Activated CD4-positive, alpha-beta T cell treated with anti-CD3 and anti-CD28 coated beads for 36 hours (primary cell): ENCODE measurements at regions of chr1 and their contacts with region 1.

Region 1: DNA sequence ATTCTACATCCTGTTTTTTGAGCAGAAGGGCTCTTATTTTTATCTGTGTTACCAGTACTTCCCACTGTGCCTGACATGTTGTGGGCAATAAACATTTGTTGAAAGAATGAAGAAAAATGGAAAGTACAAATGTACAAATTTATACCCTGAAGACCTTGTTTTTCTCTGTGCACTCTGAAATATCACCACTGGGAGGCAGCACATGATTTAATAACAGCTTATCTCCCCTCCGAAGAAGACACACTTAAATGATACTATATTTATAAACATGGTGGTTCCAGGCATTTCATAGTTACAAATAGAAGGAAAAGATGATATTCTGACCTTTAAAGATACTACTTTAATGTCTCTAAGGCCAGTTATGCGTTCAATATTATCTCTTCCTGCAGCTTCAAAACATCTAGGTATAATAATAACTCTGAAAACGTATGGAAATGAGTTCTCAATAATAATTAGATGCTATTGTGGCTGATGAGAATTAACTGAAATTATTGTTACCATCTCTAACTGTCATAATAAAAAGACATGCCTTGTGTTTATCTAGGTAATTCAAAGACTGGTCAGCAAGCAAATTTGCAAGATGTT is 12.8 kb downstream of the DYNLT5 start:
- DNase-seq: peak; percentile 69
- ATAC-seq: peak; percentile 62
- H3K4me3 Mint-ChIP-seq: no peak overlapping the region
- H3K27ac Mint-ChIP-seq: no peak overlapping the region
- H3K4me1 Mint-ChIP-seq: peaks cover 22% of the 10 kb centered on the region
- H3K27me3 Mint-ChIP-seq: no peaks in the 10 kb centered on the region

Region 2: DNA sequence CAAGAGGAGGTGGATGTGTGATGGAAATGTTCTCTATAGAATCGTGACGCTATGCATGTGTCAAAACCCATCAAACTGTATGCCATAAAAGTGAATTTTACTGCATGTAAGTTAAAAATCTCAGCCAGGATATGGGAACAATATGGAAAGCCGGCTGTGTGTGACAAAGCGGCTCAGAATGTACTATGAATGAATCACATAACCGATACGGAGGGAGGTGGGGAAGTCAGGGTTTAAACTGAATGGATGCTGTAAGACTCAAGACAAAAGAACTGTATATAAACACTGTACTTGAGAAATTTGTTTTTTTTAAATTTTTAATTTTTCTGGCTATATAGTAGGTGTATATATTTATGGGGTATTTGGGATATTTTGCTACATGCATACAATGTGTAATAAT is 1084.0 kb before region 1 on chr1:
- CTCF ChIA-PET with region 1: no interaction called
- POLR2A ChIA-PET with region 1: no interaction called
- intact Hi-C with region 1: no loop called
- DNase-seq: no peak
- ATAC-seq: no peak
- H3K4me3 Mint-ChIP-seq: no peak overlapping the region
- H3K27ac Mint-ChIP-seq: no peak overlapping the region
- H3K4me1 Mint-ChIP-seq: no peaks in the 10 kb centered on the region
- H3K27me3 Mint-ChIP-seq: peaks cover 13% of the 10 kb centered on the region

Region 3: DNA sequence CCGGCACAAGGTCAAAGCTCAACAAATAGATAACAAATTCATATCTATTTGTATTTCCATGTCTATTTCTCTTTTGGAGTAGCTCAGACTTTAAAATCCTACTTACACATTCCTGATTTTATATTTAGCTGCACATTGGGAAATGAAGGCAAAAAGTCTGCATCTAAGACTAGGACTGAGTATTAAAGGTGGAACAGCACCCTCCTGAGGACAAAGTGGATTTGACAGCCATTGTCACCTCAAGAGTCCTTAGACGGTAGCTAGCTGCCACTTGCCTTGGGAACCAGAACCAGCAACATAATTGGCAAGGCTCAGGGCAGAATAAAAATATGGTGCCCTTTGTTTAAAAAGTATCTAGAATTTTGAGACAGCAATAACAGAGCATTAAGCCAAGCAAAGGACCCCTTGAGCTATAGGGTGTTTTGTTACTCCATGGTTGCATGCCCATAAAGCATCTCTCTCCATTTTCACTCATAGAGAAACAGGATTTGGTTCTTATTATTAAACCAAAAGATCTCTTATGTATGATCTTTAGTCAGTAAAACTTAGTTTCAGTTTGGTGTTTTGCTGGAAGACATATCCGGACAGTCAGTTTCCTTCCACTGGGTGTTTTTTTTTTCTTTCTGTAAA is 261.1 kb before region 1 on chr1:
- CTCF ChIA-PET with region 1: no interaction called
- POLR2A ChIA-PET with region 1: no interaction called
- intact Hi-C with region 1: no loop called
- DNase-seq: peak; percentile 65
- ATAC-seq: no peak
- H3K4me3 Mint-ChIP-seq: no peak overlapping the region
- H3K27ac Mint-ChIP-seq: no peak overlapping the region
- H3K4me1 Mint-ChIP-seq: no peaks in the 10 kb centered on the region
- H3K27me3 Mint-ChIP-seq: peaks cover 14% of the 10 kb centered on the region

Region 4: GRCh38 chr1:66685670-66686069 is 79.4 kb before region 1 on chr1:
- CTCF ChIA-PET with region 1: no interaction called
- POLR2A ChIA-PET with region 1: no interaction called
- intact Hi-C with region 1: no loop called
- DNase-seq: no peak
- ATAC-seq: no peak
- H3K4me3 Mint-ChIP-seq: no peak overlapping the region
- H3K27ac Mint-ChIP-seq: no peak overlapping the region
- H3K4me1 Mint-ChIP-seq: no peaks in the 10 kb centered on the region
- H3K27me3 Mint-ChIP-seq: peaks cover 4% of the 10 kb centered on the region

Region 5: DNA sequence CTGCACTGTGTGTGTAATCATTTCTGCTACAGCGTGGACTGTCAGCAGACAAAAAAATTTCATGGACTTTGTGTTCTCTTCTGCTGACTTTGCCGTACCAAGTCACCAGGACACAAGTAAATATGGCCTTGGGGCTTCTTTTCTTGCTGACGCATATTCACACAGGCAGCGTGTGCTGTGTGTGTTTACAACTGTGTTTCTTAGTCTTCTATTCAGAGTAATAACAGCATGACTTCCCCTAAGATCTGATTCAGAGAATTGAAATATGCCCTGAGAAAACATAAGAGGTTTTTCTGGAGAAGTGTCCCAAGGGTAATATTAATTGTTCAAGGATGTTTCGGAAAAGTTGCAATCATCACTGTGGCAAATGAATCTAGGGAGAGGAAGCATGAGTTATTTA is 60.0 kb before region 1 on chr1:
- CTCF ChIA-PET with region 1: no interaction called
- POLR2A ChIA-PET with region 1: no interaction called
- intact Hi-C with region 1: no loop called
- DNase-seq: no peak
- ATAC-seq: no peak
- H3K4me3 Mint-ChIP-seq: no peak overlapping the region
- H3K27ac Mint-ChIP-seq: no peak overlapping the region
- H3K4me1 Mint-ChIP-seq: no peaks in the 10 kb centered on the region
- H3K27me3 Mint-ChIP-seq: peaks cover 5% of the 10 kb centered on the region

Region 6: DNA sequence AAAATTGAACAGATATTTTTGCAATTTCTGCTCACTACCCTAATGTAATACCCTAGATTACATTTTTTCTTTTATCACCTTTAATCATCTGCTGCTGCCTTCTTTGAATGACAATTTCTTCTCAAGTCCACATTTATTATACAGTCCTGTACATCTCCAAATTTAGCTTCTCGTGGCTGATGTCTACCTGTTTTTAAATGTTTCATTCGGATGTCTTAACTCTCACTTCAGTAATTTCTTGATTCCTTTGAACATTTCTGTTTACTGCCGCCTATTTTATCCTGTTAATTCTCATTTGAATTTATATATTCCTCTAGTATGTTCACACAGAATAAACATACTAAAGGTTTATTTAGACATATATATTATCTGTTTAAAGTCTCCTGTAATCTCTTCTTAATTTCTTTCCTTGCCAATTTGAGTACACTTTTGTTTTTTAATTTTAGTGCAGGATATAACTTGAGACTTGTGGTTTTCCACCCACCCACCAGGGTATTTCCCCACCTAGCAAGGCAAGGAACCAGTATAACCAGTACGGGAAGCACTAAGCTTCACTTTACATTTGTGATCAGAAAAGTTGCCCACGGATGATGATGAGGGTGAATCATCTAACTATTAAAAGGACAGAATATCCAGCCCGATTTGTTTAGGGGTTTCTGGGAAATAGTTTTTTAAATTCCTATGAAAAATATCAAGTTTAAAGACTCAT is 23.3 kb after region 1 on chr1:
- CTCF ChIA-PET with region 1: interaction called, 5 read pairs
- POLR2A ChIA-PET with region 1: no interaction called
- intact Hi-C with region 1: loop called (anchors 1 to 2 kb)
- DNase-seq: peak; percentile 81
- ATAC-seq: peak; percentile 99
- H3K4me3 Mint-ChIP-seq: peak overlapping the region; percentile 54
- H3K27ac Mint-ChIP-seq: peak overlapping the region; percentile 49
- H3K4me1 Mint-ChIP-seq: peaks cover 25% of the 10 kb centered on the region
- H3K27me3 Mint-ChIP-seq: no peaks in the 10 kb centered on the region

Region 7: GRCh38 chr1:66981679-66982078 is 216.6 kb after region 1 on chr1:
- CTCF ChIA-PET with region 1: interaction called, 6 read pairs
- POLR2A ChIA-PET with region 1: no interaction called
- intact Hi-C with region 1: loop called in 1 of 2 experiments (anchors 5 kb)
- DNase-seq: peak; percentile 58
- ATAC-seq: peak; percentile 80
- H3K4me3 Mint-ChIP-seq: peak overlapping the region; percentile 14
- H3K27ac Mint-ChIP-seq: peak overlapping the region; percentile 61
- H3K4me1 Mint-ChIP-seq: peaks cover 42% of the 10 kb centered on the region
- H3K27me3 Mint-ChIP-seq: no peaks in the 10 kb centered on the region

Region 8: GRCh38 chr1:67053785-67054772 is 289.0 kb after region 1 on chr1 and contains the start of gene SLC35D1:
- CTCF ChIA-PET with region 1: no interaction called
- POLR2A ChIA-PET with region 1: no interaction called
- intact Hi-C with region 1: loop called in 1 of 2 experiments (anchors 5 kb)
- DNase-seq: peak; percentile 77
- ATAC-seq: peak; percentile 79
- H3K4me3 Mint-ChIP-seq: peak within 1 kb of the TSS; percentile 79
- H3K27ac Mint-ChIP-seq: peak within 1 kb of the TSS; percentile 91
- H3K4me1 Mint-ChIP-seq: peaks cover 26% of the 10 kb centered on the region
- H3K27me3 Mint-ChIP-seq: peaks cover 5% of the 10 kb centered on the region
- total RNA-seq, gene SLC35D1: 8.7 to 10.3 TPM

Region 9: DNA sequence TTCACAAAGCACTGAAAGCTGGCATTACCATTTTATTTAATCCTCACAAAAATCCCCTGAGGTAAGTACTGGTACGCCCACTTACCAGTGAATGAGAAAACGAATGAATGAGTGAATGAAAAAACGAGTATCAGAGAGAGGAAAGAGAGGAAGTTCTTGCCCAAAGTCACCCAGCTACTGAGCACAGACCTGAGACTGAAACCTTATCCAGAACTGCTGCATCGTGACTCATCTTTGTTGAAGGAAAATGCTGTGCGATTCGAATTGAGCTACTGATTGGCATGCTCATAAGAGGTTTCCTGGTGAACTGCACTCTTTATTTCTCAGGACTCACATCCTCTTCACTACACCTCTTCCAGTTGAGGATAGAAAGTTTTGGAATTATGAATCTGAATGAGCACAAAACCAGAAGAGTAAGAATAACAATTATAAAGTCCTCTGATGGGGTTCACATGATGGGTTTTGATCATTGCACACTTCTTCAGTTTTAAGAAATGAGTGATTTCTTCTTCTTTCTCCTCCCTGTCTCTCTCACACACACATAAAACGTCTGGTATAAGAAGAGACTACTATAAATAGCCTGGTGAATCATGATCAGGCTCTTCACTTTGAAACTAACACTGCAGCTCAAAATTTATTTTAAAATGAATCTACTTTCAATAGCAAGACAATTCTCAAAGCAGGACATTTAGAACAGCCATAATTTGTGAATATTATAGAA is 574.7 kb after region 1 on chr1:
- CTCF ChIA-PET with region 1: no interaction called
- POLR2A ChIA-PET with region 1: no interaction called
- intact Hi-C with region 1: loop called in 1 of 2 experiments (anchors 10 kb)
- DNase-seq: peak; percentile 67
- ATAC-seq: peak; percentile 67
- H3K4me3 Mint-ChIP-seq: peak overlapping the region; percentile 40
- H3K27ac Mint-ChIP-seq: peak overlapping the region; percentile 94
- H3K4me1 Mint-ChIP-seq: peaks cover 87% of the 10 kb centered on the region
- H3K27me3 Mint-ChIP-seq: no peaks in the 10 kb centered on the region